Esophagus muscularis mucosa (tissue), 4 donors: ENCODE measurements at regions of chr2 and their contacts with region 1.

Region 1: GRCh38 chr2:25041928-25042320 is at the start of gene EFR3B:
- DNase-seq: peak; percentile 98
- H3K4me3 ChIP-seq: peak within 1 kb of the TSS; percentile 74 to 87 (median 80)
- H3K27ac ChIP-seq: peak within 1 kb of the TSS; percentile 83 to 91 (median 87)
- H3K4me1 ChIP-seq: peaks cover 20 to 29% (median 25%) of the 10 kb centered on the region in 4 donors
- H3K27me3 ChIP-seq: no peaks in the 10 kb centered on the region
- CTCF ChIP-seq: no peak
- EP300 ChIP-seq: no peak
- POLR2A ChIP-seq: no peak
- total RNA-seq, gene EFR3B: 0.65 to 2.9 (median 1.00) TPM

Region 2: GRCh38 chr2:24515831-24516230 is 526.1 kb before region 1 on chr2:
- intact Hi-C with region 1: no loop called
- DNase-seq: no peak
- H3K4me3 ChIP-seq: no peak overlapping the region
- H3K27ac ChIP-seq: no peak overlapping the region
- H3K4me1 ChIP-seq: peaks cover 34 to 73% (median 48%) of the 10 kb centered on the region in 4 donors
- H3K27me3 ChIP-seq: no peaks in the 10 kb centered on the region
- CTCF ChIP-seq: no peak
- EP300 ChIP-seq: no peak
- POLR2A ChIP-seq: no peak

Region 3: GRCh38 chr2:24977631-24978030 is 64.3 kb before region 1 on chr2:
- intact Hi-C with region 1: loop called (anchors 5 kb)
- DNase-seq: no peak
- H3K4me3 ChIP-seq: no peak overlapping the region
- H3K27ac ChIP-seq: no peak overlapping the region
- H3K4me1 ChIP-seq: peaks cover 4 to 31% (median 28%) of the 10 kb centered on the region in 4 donors
- H3K27me3 ChIP-seq: no peaks in the 10 kb centered on the region
- CTCF ChIP-seq: no peak
- EP300 ChIP-seq: no peak
- POLR2A ChIP-seq: no peak